ENCODE measurements at regions of chr3 and their contacts with region 1.

Region 1: GRCh38 chr3:52231502-52232293 is 6.3 kb upstream of the TLR9 start:
- DNase-seq: peak; percentile 90
- H3K4me3 Mint-ChIP-seq: no peak overlapping the region
- H3K27ac Mint-ChIP-seq: peak overlapping the region; percentile 73
- H3K4me1 Mint-ChIP-seq: peaks cover 37% of the 10 kb centered on the region
- H3K27me3 Mint-ChIP-seq: no peaks in the 10 kb centered on the region

Region 2: DNA sequence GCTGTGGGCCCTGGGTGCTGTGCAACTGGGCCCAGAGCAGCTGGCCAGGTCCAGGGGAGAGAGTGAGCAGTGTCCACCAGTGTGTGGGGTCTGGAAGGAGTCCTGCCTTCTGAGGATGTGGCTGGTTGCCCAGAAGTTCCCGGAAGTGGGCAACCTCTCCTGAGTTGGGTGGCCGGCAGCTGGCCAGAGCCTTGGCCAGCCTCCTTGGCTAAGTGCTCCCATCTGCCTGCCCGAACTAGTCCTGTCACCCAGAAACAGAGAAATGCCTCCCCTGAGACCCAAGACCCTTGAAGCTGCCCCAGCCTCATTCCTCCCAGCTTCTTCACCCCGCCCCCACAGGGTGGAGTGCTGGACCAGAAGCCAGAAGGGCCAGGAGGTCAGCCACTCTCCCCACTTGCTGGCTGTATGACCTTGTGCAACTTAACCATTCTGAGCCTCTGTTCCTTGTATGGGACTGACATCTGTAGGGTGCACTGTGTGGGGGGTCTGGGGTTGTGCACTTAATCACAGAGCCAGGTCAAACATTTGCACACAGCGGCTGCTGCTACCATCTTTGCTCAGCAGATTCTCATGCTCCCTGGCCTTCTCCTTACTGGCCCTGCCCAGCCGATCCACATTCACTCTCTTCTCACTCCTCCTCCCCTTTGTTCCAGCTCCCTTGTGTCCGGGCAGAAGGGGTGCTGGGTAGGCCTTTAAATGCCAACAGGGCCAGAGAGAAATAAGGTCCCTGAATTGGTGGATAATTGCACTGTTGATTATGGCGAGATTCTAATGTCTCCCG is 41.2 kb before region 1 on chr3:
- CTCF ChIA-PET with region 1: no interaction called
- POLR2A ChIA-PET with region 1: no interaction called
- intact Hi-C with region 1: no loop called
- DNase-seq: no peak
- H3K4me3 Mint-ChIP-seq: no peak overlapping the region
- H3K27ac Mint-ChIP-seq: no peak overlapping the region
- H3K4me1 Mint-ChIP-seq: no peaks in the 10 kb centered on the region
- H3K27me3 Mint-ChIP-seq: no peaks in the 10 kb centered on the region

Region 3: DNA sequence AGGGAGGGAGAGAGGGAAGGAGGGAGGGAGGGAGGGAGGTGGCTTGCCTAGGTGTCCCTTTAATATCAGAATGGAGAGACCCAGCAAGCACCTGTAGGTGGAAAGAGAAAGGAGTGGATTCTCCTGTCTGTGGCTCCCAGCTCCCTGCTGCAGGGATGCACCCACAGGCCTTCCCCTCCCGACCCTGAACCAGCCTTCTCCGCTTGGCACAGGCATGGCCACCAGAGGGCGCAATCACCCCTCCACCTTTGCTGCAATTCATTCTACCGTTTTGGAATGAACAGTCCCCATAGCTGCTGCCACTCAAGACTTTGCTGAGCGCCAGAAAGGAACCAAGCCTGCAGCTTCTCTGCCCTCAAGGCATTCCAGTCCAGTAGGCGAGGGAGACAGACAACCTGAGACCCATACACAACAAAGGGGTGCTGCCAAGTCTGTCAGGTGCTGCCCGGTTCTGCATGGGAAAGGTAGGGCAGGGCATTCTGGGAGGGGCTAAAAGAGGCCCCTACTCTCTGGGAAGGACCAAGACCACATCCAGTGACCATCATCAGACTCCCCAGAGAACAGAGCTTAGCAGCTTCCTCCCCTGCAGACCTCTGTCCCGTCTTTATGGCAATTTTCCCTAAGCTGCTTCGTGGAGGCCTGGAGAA is 11.2 kb before region 1 on chr3:
- CTCF ChIA-PET with region 1: interaction called, 136 read pairs
- POLR2A ChIA-PET with region 1: interaction called, 3 read pairs
- intact Hi-C with region 1: no loop called
- DNase-seq: peak; percentile 94
- H3K4me3 Mint-ChIP-seq: no peak overlapping the region
- H3K27ac Mint-ChIP-seq: peak overlapping the region; percentile 49
- H3K4me1 Mint-ChIP-seq: peaks cover 83% of the 10 kb centered on the region
- H3K27me3 Mint-ChIP-seq: no peaks in the 10 kb centered on the region

Region 4: GRCh38 chr3:52253314-52254304 is 21.9 kb after region 1 on chr3:
- CTCF ChIA-PET with region 1: interaction called, 23 read pairs
- POLR2A ChIA-PET with region 1: interaction called, 6 read pairs
- intact Hi-C with region 1: no loop called
- DNase-seq: peak; percentile 93
- H3K4me3 Mint-ChIP-seq: peak overlapping the region; percentile 71
- H3K27ac Mint-ChIP-seq: peak overlapping the region; percentile 97
- H3K4me1 Mint-ChIP-seq: peaks cover 88% of the 10 kb centered on the region
- H3K27me3 Mint-ChIP-seq: no peaks in the 10 kb centered on the region

Region 5: DNA sequence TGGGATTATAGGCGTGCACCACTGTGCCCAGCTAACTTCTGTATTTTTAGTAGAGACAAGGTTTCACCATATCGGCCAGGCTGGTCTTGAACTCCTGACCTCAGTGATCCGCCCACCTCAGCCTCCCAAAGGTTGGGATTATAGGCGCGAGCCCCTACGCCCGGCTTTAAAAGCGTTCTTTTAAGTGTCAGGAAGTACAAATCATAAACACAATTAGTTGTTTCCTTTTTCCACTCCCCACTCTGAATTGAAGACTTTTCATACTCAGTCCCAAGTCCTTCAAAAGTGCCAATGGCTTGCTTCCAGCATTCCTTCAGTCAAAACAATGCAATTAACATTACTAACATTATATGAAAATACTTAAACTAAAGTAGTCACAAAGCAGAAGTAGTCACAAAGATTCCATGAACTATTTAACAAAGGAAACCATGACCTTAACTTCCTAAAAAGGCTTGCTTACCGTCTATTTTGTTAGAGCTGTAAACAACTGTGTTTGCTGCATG is 38.6 kb after region 1 on chr3:
- CTCF ChIA-PET with region 1: interaction called, 148 read pairs
- POLR2A ChIA-PET with region 1: interaction called, 3 read pairs
- intact Hi-C with region 1: no loop called
- DNase-seq: peak; percentile 31
- H3K4me3 Mint-ChIP-seq: peak overlapping the region; percentile 77
- H3K27ac Mint-ChIP-seq: peak overlapping the region; percentile 91
- H3K4me1 Mint-ChIP-seq: peaks cover 85% of the 10 kb centered on the region
- H3K27me3 Mint-ChIP-seq: no peaks in the 10 kb centered on the region

Region 6: GRCh38 chr3:52317208-52318000 is 85.7 kb after region 1 on chr3:
- CTCF ChIA-PET with region 1: interaction called, 14 read pairs
- POLR2A ChIA-PET with region 1: no interaction called
- intact Hi-C with region 1: no loop called
- DNase-seq: peak; percentile 79
- H3K4me3 Mint-ChIP-seq: peak overlapping the region; percentile 41
- H3K27ac Mint-ChIP-seq: peak overlapping the region; percentile 56
- H3K4me1 Mint-ChIP-seq: peaks cover 32% of the 10 kb centered on the region
- H3K27me3 Mint-ChIP-seq: no peaks in the 10 kb centered on the region

Region 7: DNA sequence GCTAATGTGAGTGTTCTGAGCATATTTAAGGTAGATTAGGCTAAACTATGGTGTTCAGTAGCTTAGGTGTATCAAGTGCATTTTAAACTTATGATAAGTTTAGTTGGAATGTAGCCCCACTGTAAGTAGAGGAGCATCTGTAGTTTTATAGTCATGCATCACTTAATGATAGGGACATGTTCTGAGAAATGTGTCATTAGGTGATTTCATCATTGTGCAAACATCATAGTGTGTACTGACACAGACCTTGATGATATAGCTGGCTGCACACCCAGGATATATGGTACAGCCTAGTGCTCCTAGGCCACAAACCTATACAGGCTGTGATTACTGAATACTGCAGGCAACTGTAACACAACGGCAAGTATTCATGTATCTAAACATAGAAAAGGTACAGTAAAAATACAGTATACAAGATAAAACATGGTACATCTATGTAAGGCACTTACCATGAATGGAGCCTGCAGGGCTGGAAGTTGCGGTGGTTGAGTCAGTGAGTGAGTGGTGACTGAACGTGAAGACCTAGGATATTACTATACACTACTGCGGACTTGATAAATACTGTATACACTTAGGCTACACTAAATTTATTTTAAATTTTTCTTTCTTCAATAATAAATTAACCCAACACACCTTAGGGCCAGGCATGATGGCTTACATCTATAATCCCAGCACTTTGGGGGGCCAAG is 102.3 kb after region 1 on chr3:
- CTCF ChIA-PET with region 1: interaction called, 271 read pairs
- POLR2A ChIA-PET with region 1: interaction called, 3 read pairs
- intact Hi-C with region 1: loop called (anchors 1 kb)
- DNase-seq: no peak
- H3K4me3 Mint-ChIP-seq: no peak overlapping the region
- H3K27ac Mint-ChIP-seq: no peak overlapping the region
- H3K4me1 Mint-ChIP-seq: no peaks in the 10 kb centered on the region
- H3K27me3 Mint-ChIP-seq: no peaks in the 10 kb centered on the region

Region 8: GRCh38 chr3:52649461-52650210 is 417.9 kb after region 1 on chr3:
- CTCF ChIA-PET with region 1: no interaction called
- POLR2A ChIA-PET with region 1: no interaction called
- intact Hi-C with region 1: no loop called
- DNase-seq: no peak
- H3K4me3 Mint-ChIP-seq: no peak overlapping the region
- H3K27ac Mint-ChIP-seq: no peak overlapping the region
- H3K4me1 Mint-ChIP-seq: peaks cover 8% of the 10 kb centered on the region
- H3K27me3 Mint-ChIP-seq: no peaks in the 10 kb centered on the region

Region 9: GRCh38 chr3:52787672-52788625 is 556.3 kb after region 1 on chr3:
- CTCF ChIA-PET with region 1: no interaction called
- POLR2A ChIA-PET with region 1: no interaction called
- intact Hi-C with region 1: no loop called
- DNase-seq: no peak
- H3K4me3 Mint-ChIP-seq: no peak overlapping the region
- H3K27ac Mint-ChIP-seq: no peak overlapping the region
- H3K4me1 Mint-ChIP-seq: no peaks in the 10 kb centered on the region
- H3K27me3 Mint-ChIP-seq: no peaks in the 10 kb centered on the region